Panc1 (cell line): ENCODE measurements at regions of chr17 and their contacts with region 1.

Region 1: DNA sequence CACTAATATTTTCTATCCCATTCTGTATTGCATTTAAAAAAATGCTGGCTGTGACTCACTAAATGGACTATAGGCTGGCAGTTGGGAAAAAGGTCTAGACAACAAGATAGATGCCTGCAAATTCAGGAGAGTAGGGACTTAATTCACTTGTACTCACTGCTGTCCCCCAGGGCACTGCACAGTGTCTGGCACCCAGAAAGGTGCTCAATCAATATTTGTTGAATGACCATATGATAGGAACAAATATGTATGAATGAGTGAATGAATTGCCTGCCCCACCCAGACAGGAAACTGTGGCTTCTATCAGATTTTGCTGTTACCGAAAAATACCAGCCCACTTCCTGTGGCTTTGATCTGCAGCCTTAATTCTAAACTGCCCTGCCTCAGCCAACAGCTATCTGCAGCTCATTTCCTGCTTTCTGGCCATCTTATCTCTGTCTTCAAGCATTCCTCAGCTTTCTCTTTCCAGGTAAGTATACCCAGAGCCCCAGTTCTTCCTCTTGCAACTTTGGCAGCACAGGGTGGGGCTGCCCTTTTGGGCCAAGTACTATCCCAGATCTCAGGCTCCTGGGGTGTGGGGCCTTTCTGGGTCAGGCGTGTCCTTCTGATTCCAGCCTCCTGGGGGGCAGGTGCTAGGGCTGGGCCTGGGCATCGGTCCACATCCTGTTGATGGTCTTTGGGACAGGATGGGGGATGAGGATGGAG is 15.3 kb upstream of the TNS4 start:
- DNase-seq: no peak
- ATAC-seq: peak; percentile 31
- H3K4me3 ChIP-seq: no peak overlapping the region
- H3K27ac ChIP-seq: no peak overlapping the region
- H3K4me1 ChIP-seq: peaks cover 5% of the 10 kb centered on the region; the same call in 1 of the 2 replicates
- H3K27me3 ChIP-seq: no peaks in the 10 kb centered on the region
- CTCF ChIP-seq: no peak

Region 2: DNA sequence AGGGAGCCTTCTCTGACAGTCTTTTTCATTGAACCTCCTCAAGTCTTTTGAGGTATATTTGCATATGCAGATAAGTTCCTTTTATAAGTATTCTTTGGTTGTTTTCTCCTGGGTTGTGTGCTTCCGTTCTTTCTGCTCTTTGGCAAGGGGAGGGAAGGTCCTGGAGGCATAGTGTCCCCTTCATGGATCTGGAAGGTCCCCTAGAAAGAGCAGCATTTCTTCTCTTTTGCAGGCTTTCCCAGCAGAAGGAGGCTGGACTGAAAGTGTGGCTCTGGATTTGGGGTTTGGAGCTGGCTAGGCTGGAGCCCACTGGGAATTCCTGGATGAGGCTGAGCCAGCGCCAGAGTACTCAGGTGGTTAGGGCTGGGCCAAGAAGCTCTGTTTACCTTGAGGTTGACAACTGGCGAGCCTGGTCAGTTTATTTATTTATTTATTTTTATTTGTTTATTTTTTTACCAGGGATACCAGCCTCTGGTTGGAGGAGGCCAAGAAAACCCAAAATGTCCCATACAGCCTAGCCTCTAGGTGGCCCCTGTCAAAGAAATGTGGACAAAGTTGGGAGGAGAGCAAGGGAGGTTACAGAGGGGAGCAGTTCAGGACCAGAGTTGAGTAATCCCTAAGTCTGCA is 93.6 kb before region 1 on chr17:
- CTCF ChIA-PET with region 1: interaction called, 3 read pairs
- POLR2A ChIA-PET with region 1: interaction called, 11 read pairs
- in situ Hi-C with region 1: no loop called
- intact Hi-C with region 1: no loop called
- DNase-seq: no peak
- ATAC-seq: peak; percentile 68
- H3K4me3 ChIP-seq: no peak overlapping the region
- H3K27ac ChIP-seq: no peak overlapping the region
- H3K4me1 ChIP-seq: peaks cover 7% of the 10 kb centered on the region
- H3K27me3 ChIP-seq: no peaks in the 10 kb centered on the region
- CTCF ChIP-seq: no peak; the same call in 1 of the 2 replicates